ENCODE measurements at regions of chr15 and their contacts with region 1.

Region 1: DNA sequence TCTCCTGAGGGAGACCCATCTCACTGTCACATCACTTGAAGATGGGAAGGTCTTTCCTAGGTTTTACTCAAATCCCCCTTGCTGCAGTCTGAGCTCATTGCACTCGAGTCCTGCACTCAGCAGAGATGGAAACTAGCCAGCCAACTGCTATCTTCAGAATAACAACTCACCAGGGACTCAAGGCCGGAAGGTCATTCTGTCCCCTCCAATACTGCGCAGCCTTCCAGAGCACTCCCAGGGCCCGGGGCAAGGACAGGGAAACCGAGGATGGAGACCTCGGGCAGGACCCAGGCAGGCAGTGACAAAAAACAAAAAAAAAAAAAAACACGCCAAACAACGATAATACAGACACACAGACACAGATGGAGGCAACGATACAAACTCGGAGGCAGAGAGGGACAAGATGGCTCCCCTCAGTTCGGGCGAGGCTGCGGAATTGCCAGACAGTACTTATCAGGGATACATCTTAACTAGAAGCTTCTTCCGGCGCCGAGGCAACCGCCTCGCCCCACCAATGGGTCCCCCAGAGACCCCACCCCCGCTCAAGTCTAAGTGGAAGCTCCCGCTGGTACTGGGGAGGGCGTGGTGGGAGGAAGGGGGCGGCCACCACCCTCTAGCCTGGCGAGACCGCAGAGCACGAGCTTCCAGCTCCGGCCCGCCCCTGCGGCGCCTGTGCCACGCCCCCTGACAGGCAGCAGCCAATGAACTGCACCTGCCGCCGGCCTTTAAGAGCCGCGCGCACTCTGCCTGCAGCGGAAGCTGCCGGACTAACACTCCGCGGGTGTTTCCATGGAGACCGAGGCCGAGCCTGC is 7.0 kb upstream of the MAP1A start:
- DNase-seq: peak; percentile 97 to 98
- H3K4me3 ChIP-seq: peak overlapping the region; percentile 59 to 83 (median 78)
- H3K27ac ChIP-seq: peak overlapping the region; percentile 53
- H3K4me1 ChIP-seq: peaks cover 3 to 16% (median 8%) of the 10 kb centered on the region in 4 experiments; a peak in 6 of 7 replicates
- H3K27me3 ChIP-seq: peaks cover 4 to 16% (median 10%) of the 10 kb centered on the region in 4 experiments
- CTCF ChIP-seq: peak in 1 of 3 experiments; percentile 46; a peak in 1 of 4 replicates
- EP300 ChIP-seq: no peak
- POLR2A ChIP-seq: peak; percentile 30 to 74
- RAD21 ChIP-seq: no peak; a peak in 1 of 4 replicates

Region 2: DNA sequence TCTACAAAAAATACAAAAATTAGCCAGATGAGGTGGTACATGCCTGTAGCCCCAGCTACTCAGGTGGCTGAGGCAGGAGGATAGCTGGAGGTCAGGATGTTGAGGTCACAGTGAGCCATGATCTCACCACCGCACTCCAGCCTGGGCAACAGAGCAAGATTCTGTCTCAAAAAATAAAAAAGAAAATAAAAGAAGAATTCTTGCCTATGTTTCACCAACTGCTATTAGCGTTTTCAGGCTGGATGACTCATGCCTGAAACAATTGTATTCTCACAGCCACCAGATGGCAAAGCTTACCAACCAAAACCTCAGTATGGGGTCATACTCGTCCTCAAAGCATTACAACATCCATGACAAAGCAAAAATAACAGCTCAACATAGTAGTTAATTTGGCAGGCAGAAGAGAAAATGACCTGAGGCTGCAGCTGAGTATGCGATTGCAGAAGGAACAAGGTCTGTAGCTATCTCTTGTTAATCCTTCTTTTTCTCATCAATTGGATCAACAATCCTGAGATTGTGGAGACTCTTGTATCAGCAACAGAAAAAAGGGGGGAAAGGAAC is 69.6 kb before region 1 on chr15:
- CTCF ChIA-PET with region 1: interaction called, 12 read pairs
- POLR2A ChIA-PET with region 1: interaction called, 10 read pairs
- DNase-seq: peak in 1 of 2 experiments; percentile 15
- H3K4me3 ChIP-seq: no peak overlapping the region
- H3K27ac ChIP-seq: no peak overlapping the region
- H3K4me1 ChIP-seq: no peaks in the 10 kb centered on the region
- H3K27me3 ChIP-seq: no peaks in the 10 kb centered on the region
- CTCF ChIP-seq: no peak
- EP300 ChIP-seq: no peak
- POLR2A ChIP-seq: no peak
- RAD21 ChIP-seq: peak; percentile 31 to 32; a peak in 3 of 4 replicates

Region 3: DNA sequence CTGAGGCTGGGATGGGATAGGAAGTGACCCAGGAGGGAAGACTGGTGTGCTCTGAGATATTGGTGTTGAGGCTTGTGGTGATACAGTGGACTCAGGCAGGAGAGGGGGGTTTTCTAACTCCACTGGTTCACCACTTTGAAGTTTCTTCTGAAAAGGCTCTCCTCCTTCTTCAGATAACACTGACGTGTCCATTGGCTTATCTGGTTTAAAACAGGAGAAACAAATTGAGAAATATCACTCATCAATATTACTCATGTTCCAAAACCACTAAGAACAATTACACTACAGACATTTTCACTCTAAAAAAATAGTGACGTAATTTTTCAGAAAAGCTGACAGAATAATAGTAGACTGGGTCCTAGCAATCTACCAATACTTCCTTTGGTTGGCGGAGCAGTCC is 40.5 kb before region 1 on chr15:
- CTCF ChIA-PET with region 1: interaction called, 10 read pairs
- POLR2A ChIA-PET with region 1: interaction called, 5 read pairs
- DNase-seq: no peak
- H3K4me3 ChIP-seq: no peak overlapping the region
- H3K27ac ChIP-seq: no peak overlapping the region
- H3K4me1 ChIP-seq: no peaks in the 10 kb centered on the region
- H3K27me3 ChIP-seq: peaks cover 0 to 1% (median 0%) of the 10 kb centered on the region in 4 experiments; a peak in 1 of 7 replicates
- CTCF ChIP-seq: no peak
- EP300 ChIP-seq: no peak
- POLR2A ChIP-seq: no peak
- RAD21 ChIP-seq: no peak

Region 4: GRCh38 chr15:43492673-43493601 is 17.5 kb before region 1 on chr15 and contains the start of gene TP53BP1:
- CTCF ChIA-PET with region 1: interaction called, 121 read pairs
- POLR2A ChIA-PET with region 1: interaction called, 81 read pairs
- DNase-seq: peak; percentile 84 to 95
- H3K4me3 ChIP-seq: peak within 1 kb of the TSS; percentile 66 to 97 (median 82)
- H3K27ac ChIP-seq: peak within 1 kb of the TSS; percentile 94
- H3K4me1 ChIP-seq: peaks cover 3 to 13% (median 4%) of the 10 kb centered on the region in 4 experiments; a peak in 5 of 7 replicates
- H3K27me3 ChIP-seq: no peaks in the 10 kb centered on the region
- CTCF ChIP-seq: no peak
- EP300 ChIP-seq: no peak
- POLR2A ChIP-seq: peak; percentile 49 to 52; a peak in 2 of 3 replicates
- RAD21 ChIP-seq: no peak
- total RNA-seq, gene TP53BP1: 63.6 and 68.5 TPM in 2 replicates

Region 5: DNA sequence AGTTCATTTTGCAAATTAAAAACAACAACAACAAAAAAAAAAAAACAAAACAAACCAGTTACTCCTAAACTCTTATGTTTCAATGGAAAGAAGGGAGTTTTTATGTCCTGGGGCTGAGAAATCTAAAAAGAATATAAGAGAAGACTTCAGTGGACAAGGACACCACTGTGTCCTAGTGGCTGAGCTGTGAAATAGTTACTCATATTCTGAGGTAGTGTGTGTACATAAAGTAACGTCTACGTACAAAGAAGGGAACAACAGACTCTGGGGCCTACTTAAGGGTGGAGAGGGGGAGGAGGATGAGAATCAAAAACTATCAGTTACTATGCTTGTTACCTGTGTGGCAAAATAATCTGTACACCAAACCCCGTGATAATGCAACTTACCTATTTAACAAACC is 11.4 kb before region 1 on chr15:
- CTCF ChIA-PET with region 1: interaction called, 121 read pairs
- POLR2A ChIA-PET with region 1: interaction called, 81 read pairs
- DNase-seq: no peak
- H3K4me3 ChIP-seq: no peak overlapping the region
- H3K27ac ChIP-seq: no peak overlapping the region
- H3K4me1 ChIP-seq: peaks cover 0 to 2% (median under 1%) of the 10 kb centered on the region in 4 experiments; a peak in 3 of 7 replicates
- H3K27me3 ChIP-seq: no peaks in the 10 kb centered on the region
- CTCF ChIP-seq: no peak
- EP300 ChIP-seq: no peak
- POLR2A ChIP-seq: no peak
- RAD21 ChIP-seq: no peak

Region 6: DNA sequence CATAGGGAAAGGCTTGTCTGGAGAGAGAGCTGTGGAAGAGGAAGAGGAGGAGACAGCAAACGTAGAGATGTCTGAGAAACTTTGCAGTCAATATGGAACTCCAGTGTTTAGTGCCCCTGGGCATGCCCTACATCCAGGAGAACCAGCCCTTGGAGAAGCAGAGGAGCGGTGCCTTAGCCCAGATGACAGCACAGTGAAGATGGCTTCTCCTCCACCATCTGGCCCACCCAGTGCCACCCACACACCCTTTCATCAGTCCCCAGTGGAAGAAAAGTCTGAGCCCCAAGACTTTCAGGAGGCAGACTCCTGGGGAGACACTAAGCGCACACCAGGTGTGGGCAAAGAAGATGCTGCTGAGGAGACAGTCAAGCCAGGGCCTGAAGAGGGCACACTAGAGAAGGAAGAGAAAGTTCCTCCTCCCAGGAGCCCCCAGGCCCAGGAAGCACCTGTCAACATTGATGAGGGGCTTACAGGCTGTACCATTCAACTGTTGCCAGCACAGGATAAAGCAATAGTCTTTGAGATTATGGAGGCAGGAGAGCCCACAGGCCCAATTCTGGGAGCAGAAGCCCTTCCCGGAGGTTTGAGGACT is 13.9 kb after region 1 on chr15:
- CTCF ChIA-PET with region 1: interaction called, 34 read pairs
- POLR2A ChIA-PET with region 1: interaction called, 14 read pairs
- DNase-seq: no peak
- H3K4me3 ChIP-seq: no peak overlapping the region
- H3K27ac ChIP-seq: no peak overlapping the region
- H3K4me1 ChIP-seq: peaks cover 0 to 4% (median 0%) of the 10 kb centered on the region in 4 experiments; a peak in 1 of 7 replicates
- H3K27me3 ChIP-seq: peaks cover 0 to 14% (median 11%) of the 10 kb centered on the region in 4 experiments; a peak in 5 of 7 replicates
- CTCF ChIP-seq: no peak
- EP300 ChIP-seq: no peak
- POLR2A ChIP-seq: no peak
- RAD21 ChIP-seq: peak; percentile 9 to 13; a peak in 2 of 4 replicates

Region 7: GRCh38 chr15:43531018-43531670 is 20.7 kb after region 1 on chr15:
- CTCF ChIA-PET with region 1: interaction called, 34 read pairs
- POLR2A ChIA-PET with region 1: interaction called, 14 read pairs
- DNase-seq: no peak
- H3K4me3 ChIP-seq: no peak overlapping the region
- H3K27ac ChIP-seq: no peak overlapping the region
- H3K4me1 ChIP-seq: peaks cover 0 to 12% (median 2%) of the 10 kb centered on the region in 4 experiments; a peak in 4 of 7 replicates
- H3K27me3 ChIP-seq: no peaks in the 10 kb centered on the region; a peak in 1 of 7 replicates
- CTCF ChIP-seq: 0 out of 4 replicates have a peak, but pooled peaks of 1 of the 3 experiments have one; percentile 2
- EP300 ChIP-seq: no peak
- POLR2A ChIP-seq: no peak
- RAD21 ChIP-seq: no peak